ENCODE measurements at regions of chr13 and their contacts with region 1.

Region 1: DNA sequence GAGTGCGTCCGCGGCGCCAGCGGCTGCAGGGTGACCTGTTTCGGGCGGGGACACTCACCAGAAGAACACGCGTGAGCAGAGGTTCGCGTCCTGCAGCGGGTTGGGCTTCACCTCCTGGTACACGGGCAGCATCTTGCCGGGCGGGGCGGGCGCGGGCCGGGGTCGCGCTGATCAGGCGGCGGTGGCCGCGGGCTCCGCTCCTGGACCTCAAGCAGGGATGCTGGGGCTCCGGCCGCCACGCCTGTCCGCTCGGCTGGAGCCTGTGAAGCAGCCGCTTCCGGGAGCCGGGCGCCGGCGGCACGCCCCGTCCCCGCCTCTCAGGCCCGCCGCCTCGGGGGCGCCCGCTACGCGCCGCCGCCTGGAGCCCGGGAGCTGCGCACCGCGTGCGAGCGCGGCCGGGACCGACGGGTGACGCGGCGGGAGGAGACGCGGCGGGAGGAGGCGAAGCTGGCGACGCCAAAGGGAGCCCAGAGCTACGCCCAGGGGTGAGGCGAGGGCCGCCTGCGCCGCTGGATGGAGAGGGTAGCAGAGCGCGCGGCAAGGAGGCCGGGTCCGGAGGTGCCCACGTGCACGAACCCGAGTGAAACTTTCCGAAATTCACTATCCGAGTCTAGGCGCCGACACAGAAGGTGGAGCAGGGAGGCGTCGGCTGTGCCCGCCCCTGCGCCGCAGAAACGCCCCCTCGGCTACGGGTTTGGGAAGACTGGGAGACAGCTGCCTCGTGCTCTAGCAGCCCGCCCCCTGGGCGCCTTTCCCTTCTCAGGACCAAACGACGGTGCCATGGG is at the start of gene ABCC4:
- DNase-seq: peak; percentile 53 to 76
- ATAC-seq: peak; percentile 60 to 61
- H3K4me3 ChIP-seq: peak within 1 kb of the TSS; percentile 65 to 91 (median 74)
- H3K27ac ChIP-seq: peak within 1 kb of the TSS; percentile 76 to 88 (median 84)
- H3K4me1 ChIP-seq: peaks cover 24 to 30% of the 10 kb centered on the region in 2 donors
- H3K27me3 ChIP-seq: no peaks in the 10 kb centered on the region
- CTCF ChIP-seq: no peak
- POLR2A ChIP-seq: peak; percentile 59 to 73
- total RNA-seq, gene ABCC4: 5.4 to 16.2 (median 11.9) TPM

Region 2: GRCh38 chr13:94210816-94211215 is 1090.6 kb before region 1 on chr13:
- in situ Hi-C with region 1: no loop called
- intact Hi-C with region 1: no loop called
- DNase-seq: no peak
- ATAC-seq: no peak
- H3K4me3 ChIP-seq: no peak overlapping the region
- H3K27ac ChIP-seq: no peak overlapping the region
- H3K4me1 ChIP-seq: no peaks in the 10 kb centered on the region
- H3K27me3 ChIP-seq: no peaks in the 10 kb centered on the region
- CTCF ChIP-seq: no peak
- POLR2A ChIP-seq: no peak

Region 3: DNA sequence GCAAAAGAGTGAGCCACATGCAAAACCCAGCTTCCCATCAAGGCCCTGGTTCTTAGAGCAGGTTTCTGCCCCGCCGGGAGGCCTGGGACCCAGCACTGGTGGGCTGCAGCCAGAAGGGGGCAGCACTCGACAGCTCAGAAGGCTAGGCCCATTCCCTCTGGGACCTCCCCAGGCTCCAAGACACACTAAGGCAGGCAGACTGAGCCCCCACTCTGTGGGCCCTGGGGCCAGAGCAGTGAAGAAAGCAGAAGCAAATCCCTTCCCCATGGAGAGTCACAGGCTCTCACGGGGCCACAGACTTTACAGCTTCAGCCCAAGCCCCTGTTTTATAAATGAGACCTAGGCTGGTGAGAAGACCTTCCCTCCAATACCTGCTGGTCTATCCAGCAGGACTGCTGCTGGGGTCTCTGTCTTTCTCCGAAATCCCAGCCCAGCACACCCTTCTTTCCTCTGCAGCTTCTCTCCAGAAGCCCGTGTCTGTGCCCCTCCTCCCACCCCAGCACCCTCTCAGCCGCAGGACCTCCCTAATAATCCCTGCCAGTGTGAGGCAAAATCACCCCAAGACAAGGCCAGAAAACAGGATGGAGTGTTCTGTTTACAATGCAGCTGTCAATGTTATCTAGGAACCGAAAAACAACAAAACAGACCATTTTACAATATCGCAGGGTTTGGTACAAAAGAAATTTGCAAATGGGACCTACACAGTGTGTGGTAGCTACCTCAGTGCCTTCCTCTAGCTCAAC is 109.4 kb before region 1 on chr13:
- in situ Hi-C with region 1: loop called in 2 of 4 experiments (anchors 10 kb)
- intact Hi-C with region 1: loop called (anchors 2 kb)
- DNase-seq: peak; percentile 31 to 72
- ATAC-seq: peak; percentile 60 to 69
- H3K4me3 ChIP-seq: no peak overlapping the region
- H3K27ac ChIP-seq: peak overlapping the region; percentile 43 to 70 (median 60)
- H3K4me1 ChIP-seq: peaks cover 18 to 23% of the 10 kb centered on the region in 2 donors
- H3K27me3 ChIP-seq: no peaks in the 10 kb centered on the region
- CTCF ChIP-seq: peak; percentile 74 to 83 (median 80)
- POLR2A ChIP-seq: no peak

Region 4: DNA sequence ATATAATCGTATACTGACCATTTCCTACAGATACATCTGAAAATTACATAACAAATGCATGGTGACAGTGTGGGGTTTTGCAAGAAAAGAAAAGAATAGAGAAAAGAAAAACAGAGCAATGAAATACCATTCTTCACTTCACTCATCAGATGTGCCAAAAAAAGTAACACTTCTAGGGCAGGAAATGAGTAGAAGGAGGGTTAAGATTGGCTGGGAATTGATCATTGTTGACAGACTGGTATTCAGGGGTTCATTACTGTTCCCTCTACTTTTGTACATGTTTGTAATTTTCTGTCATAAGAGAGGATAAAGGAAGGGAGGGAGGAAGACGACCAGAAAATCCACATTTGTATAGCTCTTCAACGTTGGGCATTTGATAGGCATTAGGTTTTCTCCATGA is 31.6 kb before region 1 on chr13:
- in situ Hi-C with region 1: no loop called
- intact Hi-C with region 1: loop called (anchors 2 kb)
- DNase-seq: no peak
- ATAC-seq: no peak
- H3K4me3 ChIP-seq: no peak overlapping the region
- H3K27ac ChIP-seq: peak overlapping the region; percentile 83 to 93 (median 89)
- H3K4me1 ChIP-seq: peaks cover 14 to 27% of the 10 kb centered on the region in 2 donors
- H3K27me3 ChIP-seq: no peaks in the 10 kb centered on the region
- CTCF ChIP-seq: no peak
- POLR2A ChIP-seq: no peak

Region 5: DNA sequence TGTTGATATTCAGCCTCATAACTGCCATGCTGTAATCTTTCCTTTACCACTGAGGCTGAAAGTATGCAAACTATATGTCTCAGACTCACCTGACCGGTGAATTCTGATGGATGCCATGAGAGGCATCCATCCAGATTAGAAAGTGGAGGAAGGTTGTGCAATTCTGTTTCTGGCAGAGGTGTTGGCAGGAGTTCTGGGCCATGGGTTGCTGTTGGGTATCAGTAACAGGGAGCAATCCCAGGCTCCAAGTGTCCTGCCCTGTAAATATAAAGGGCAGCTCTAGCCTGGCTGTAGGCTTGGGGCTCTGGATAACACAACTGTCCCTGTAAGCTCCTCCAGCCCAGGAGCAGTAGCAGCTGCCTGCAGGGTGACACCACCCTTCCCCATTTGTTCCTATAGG is 77.2 kb after region 1 on chr13:
- in situ Hi-C with region 1: loop called in 2 of 4 experiments (anchors 5 to 10 kb)
- intact Hi-C with region 1: loop called (anchors 1 kb)
- DNase-seq: peak; percentile 76 to 87
- ATAC-seq: peak; percentile 89 to 92
- H3K4me3 ChIP-seq: no peak overlapping the region
- H3K27ac ChIP-seq: peak overlapping the region; percentile 63 to 84 (median 76)
- H3K4me1 ChIP-seq: peaks cover 17 to 22% of the 10 kb centered on the region in 2 donors
- H3K27me3 ChIP-seq: no peaks in the 10 kb centered on the region
- CTCF ChIP-seq: no peak
- POLR2A ChIP-seq: no peak

Region 6: DNA sequence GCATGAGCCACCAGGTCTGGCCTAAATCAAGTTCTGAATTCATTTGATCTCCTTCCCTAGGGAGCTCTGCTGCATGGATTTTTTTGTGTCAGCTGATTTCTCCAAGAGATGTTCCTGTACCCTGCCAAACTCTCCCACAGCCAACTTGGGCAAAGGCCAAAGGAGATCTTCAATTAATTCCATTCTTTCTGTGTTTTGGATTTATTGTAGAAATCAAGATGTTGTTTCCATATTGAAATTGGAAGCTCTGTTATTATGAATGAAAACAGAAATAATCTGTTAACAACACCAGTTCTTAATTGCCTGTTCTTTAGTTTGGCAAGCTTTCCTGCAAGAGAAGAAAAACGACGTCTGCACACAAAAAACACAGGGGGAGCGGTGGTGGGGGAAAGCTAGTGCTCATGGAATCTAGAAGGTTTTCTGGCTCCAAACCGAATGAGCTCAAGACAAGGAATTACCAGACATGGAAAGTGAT is 86.4 kb after region 1 on chr13:
- in situ Hi-C with region 1: loop called in 3 of 4 experiments (anchors 5 to 10 kb)
- intact Hi-C with region 1: no loop called
- DNase-seq: no peak
- ATAC-seq: no peak
- H3K4me3 ChIP-seq: no peak overlapping the region
- H3K27ac ChIP-seq: no peak overlapping the region
- H3K4me1 ChIP-seq: no peaks in the 10 kb centered on the region
- H3K27me3 ChIP-seq: no peaks in the 10 kb centered on the region
- CTCF ChIP-seq: no peak
- POLR2A ChIP-seq: no peak

Region 7: DNA sequence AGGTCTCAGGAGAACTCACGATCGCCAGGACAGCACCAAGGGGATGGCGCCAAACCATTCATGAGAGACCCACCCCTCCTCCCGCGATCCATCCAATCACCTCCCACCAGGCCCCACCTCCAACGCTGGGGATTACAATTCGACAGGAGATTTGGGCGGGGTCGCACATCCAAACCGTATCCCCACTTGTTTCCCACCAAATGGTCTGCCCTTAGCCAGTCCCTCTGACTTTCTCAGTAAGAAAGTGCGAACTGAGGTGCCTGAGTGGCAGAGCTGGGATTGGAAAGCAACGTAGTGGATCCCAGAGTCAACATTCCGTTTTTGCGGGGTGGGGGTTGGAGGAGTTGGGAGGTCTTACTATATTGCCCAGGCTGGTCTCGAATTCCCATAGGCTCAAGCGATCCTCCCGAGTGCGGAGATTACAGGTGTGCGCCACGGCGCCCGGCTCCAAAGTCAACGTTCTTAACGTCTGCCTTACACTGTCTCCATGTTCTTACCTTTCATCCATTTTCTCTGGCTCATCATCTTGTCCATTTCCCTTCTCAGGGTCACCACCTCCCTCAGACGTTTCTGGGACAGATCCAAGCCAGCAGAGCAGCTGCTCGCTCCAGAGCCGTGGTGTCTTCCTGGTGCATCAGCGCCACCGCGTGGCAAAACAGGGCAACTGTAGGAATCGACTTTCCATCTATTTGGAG is 102.6 kb after region 1 on chr13:
- in situ Hi-C with region 1: loop called in 1 of 4 experiments (anchors 10 kb)
- intact Hi-C with region 1: loop called (anchors 1 kb)
- DNase-seq: peak; percentile 50 to 69
- ATAC-seq: peak; percentile 88 to 91
- H3K4me3 ChIP-seq: peak overlapping the region; percentile 22 to 60 (median 48)
- H3K27ac ChIP-seq: no peak overlapping the region
- H3K4me1 ChIP-seq: peaks cover 0 to 5% of the 10 kb centered on the region in 2 donors
- H3K27me3 ChIP-seq: no peaks in the 10 kb centered on the region
- CTCF ChIP-seq: peak; percentile 85 to 93 (median 92)
- POLR2A ChIP-seq: no peak